HCT116 (cell line): ENCODE measurements at regions of chrX and their contacts with region 1.

Region 1: DNA sequence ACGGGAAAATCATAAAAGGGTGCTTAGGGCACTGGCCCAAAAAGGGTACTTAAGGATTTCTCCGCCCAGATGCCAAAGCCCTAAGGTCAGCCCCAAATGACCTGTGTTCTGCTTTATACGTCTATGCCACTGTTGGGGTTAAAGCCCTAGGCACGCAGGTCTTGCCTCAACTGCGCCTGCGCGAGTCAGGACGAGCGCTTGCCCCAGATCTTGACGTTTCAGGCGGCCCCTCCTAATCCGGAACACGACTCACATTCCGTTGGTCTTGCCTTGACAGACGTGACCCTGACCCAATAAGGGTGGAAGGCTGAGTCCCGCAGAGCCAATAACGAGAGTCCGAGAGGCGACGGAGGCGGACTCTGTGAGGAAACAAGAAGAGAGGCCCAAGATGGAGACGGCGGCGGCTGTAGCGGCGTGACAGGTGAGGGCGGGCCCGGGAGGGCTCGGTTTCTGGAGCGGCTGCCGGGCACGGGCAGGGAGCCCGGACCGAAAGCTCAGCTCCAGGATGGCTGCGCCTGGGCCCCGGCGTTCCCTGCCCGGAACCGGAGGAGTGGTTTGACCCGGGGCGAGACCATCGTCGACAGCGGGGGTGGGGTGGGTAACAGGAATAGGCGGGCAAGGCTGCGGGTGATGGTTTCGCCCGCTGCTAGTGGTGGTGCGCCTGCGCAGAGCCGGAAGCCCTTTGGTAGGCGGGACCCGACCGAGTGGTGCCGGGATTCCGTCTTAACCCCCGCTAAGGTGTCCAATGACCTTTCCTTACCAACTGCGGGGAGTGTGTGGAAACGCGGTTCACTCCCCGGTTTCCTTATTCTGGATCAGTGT is at the start of gene ARAF:
- DNase-seq: peak; percentile 99
- ATAC-seq: peak; percentile 96
- H3K4me3 ChIP-seq: peak within 1 kb of the TSS; percentile 65 to 79
- H3K27ac ChIP-seq: peak within 1 kb of the TSS; percentile 72
- H3K4me1 ChIP-seq: peaks cover 0 to 15% of the 10 kb centered on the region in 2 experiments; a peak in 1 of 4 replicates
- H3K27me3 ChIP-seq: no peaks in the 10 kb centered on the region
- CTCF ChIP-seq: no peak
- POLR2A ChIP-seq: peak; percentile 33
- RAD21 ChIP-seq: no peak
- total RNA-seq, gene ARAF: 35.4 TPM

Region 2: GRCh38 chrX:47644557-47645091 is 83.6 kb after region 1 on chrX:
- CTCF ChIA-PET with region 1: no interaction called
- POLR2A ChIA-PET with region 1: no interaction called
- RAD21 ChIA-PET with region 1: no interaction called
- intact Hi-C with region 1: loop called (anchors 2 kb)
- DNase-seq: no peak
- ATAC-seq: peak; percentile 58; the same call in 1 of the 2 replicates
- H3K4me3 ChIP-seq: no peak overlapping the region
- H3K27ac ChIP-seq: no peak overlapping the region
- H3K4me1 ChIP-seq: peaks cover 2 to 9% of the 10 kb centered on the region in 2 experiments; a peak in 3 of 4 replicates
- H3K27me3 ChIP-seq: no peaks in the 10 kb centered on the region
- CTCF ChIP-seq: peak in 2 of 3 experiments; percentile 14 to 23; a peak in 1 of 6 replicates
- POLR2A ChIP-seq: no peak
- RAD21 ChIP-seq: no peak

Region 3: DNA sequence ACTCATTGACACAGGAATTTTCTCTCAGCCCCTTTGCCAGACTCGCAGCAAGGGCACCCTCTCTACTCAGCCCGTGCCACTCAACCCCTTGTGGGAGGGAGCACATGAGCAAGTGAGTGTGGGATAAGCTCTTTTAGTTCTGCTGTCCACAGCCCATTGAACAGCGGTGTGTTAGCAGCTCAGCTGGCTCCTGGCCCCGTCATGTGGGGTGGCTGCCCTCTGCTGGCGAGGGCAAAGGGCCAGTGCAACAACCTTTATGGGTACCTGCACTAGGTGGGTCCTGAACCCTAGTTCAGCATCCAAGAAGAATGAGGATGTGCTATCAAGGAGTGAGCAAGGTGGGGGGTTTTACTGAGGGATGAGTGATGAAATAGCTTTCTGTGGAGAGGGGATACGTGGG is 190.6 kb after region 1 on chrX:
- CTCF ChIA-PET with region 1: no interaction called
- POLR2A ChIA-PET with region 1: no interaction called
- RAD21 ChIA-PET with region 1: no interaction called
- intact Hi-C with region 1: loop called (anchors 2 kb)
- DNase-seq: peak; percentile 13
- ATAC-seq: peak; percentile 80
- H3K4me3 ChIP-seq: no peak overlapping the region
- H3K27ac ChIP-seq: no peak overlapping the region
- H3K4me1 ChIP-seq: no peaks in the 10 kb centered on the region
- H3K27me3 ChIP-seq: no peaks in the 10 kb centered on the region
- CTCF ChIP-seq: peak; percentile 39 to 58 (median 55); a peak in 5 of 6 replicates
- POLR2A ChIP-seq: no peak
- RAD21 ChIP-seq: peak; percentile 74

Region 4: DNA sequence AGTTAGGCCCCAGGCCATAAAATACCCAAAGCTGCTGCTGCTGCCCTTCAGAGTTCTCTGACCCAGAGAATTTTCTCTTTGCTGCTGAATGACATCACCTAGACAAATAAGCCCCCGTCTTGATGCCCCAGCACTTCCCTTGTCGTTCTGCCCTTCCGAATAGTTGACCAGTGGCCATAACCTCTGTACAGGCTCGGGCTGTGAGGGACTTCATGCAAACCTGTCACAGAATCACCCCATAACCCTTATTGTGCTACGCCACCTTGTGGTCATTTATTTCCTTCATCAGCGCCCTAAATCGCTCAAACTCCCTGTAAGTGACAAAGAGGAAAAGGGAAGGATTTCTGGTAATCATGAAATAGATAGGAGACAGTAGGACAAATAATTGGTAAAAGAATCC is 464.5 kb after region 1 on chrX:
- CTCF ChIA-PET with region 1: no interaction called
- POLR2A ChIA-PET with region 1: no interaction called
- RAD21 ChIA-PET with region 1: no interaction called
- intact Hi-C with region 1: loop called (anchors 5 kb)
- DNase-seq: peak; percentile 64
- ATAC-seq: peak; percentile 77
- H3K4me3 ChIP-seq: no peak overlapping the region
- H3K27ac ChIP-seq: no peak overlapping the region
- H3K4me1 ChIP-seq: no peaks in the 10 kb centered on the region
- H3K27me3 ChIP-seq: no peaks in the 10 kb centered on the region
- CTCF ChIP-seq: peak; percentile 43 to 65 (median 64); a peak in 5 of 6 replicates
- POLR2A ChIP-seq: no peak
- RAD21 ChIP-seq: peak; percentile 78